BJ (cell line): ENCODE measurements at regions of chr11 and their contacts with region 1.

Region 1: GRCh38 chr11:11022125-11022730 is 164.4 kb upstream of the ZBED5 start:
- DNase-seq: no peak
- H3K4me3 ChIP-seq: no peak overlapping the region
- H3K27me3 ChIP-seq: peaks cover 2% of the 10 kb centered on the region; the same call in 1 of the 2 replicates
- CTCF ChIP-seq: peak; percentile 53

Region 2: GRCh38 chr11:10808553-10809372 is 213.5 kb before region 1 on chr11 and contains the start of gene EIF4G2:
- CTCF ChIA-PET with region 1: interaction called, 10 read pairs
- POLR2A ChIA-PET with region 1: interaction called, 4 read pairs
- DNase-seq: peak; percentile 94
- H3K4me3 ChIP-seq: peak within 1 kb of the TSS; percentile 98
- H3K27me3 ChIP-seq: no peaks in the 10 kb centered on the region
- CTCF ChIP-seq: 0 out of 2 replicates have a peak, but pooled peaks have one; percentile 1
- polyA plus RNA-seq, gene EIF4G2: 472 and 1,009 TPM in 2 replicates

Region 3: DNA sequence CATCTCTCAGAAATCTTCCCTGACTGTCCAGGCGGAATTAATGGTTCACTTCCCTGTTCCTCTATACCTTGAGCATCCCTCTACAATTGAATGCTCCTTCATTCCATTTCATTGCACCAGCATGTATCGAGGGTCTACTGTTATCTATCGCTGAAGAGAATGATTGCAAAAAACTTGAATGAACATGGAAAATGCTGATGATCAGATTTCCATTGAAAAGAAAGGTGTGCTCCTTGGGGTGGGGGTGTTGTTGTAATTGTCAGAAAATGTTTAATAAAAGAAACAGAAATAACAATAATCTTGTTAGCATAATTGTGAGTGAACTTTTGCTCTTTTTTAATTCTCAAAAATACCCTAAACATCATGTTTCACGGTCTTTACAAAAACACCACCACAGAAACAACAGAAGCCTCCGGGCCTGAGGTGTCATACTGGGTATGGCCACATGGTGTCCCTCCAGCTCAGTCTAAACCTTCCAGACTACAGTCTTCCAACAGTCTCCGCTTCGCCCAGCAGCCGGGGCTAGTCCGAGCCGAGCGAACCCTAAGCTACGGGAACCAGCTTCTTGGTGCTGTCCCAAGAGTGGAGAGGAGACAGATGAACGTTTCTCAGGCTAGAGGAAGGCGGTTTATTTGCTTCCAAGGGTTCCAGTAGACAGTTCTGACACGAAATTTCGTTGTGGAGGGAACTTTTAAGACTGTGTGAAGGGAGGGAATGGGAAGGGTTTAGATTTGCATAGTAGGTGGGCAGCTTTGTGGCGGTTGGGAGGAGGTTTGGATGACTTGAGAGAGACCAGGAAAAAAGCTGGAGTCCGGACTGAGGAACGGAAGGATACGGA is 88.6 kb before region 1 on chr11:
- CTCF ChIA-PET with region 1: interaction called, 72 read pairs
- POLR2A ChIA-PET with region 1: interaction called, 3 read pairs
- DNase-seq: peak; percentile 62
- H3K4me3 ChIP-seq: peak overlapping the region; percentile 49
- H3K27me3 ChIP-seq: no peaks in the 10 kb centered on the region
- CTCF ChIP-seq: peak; percentile 91

Region 4: GRCh38 chr11:11036848-11037732 is 14.9 kb after region 1 on chr11:
- CTCF ChIA-PET with region 1: interaction called, 67 read pairs
- POLR2A ChIA-PET with region 1: no interaction called
- DNase-seq: no peak
- H3K4me3 ChIP-seq: no peak overlapping the region
- H3K27me3 ChIP-seq: peaks cover 1% of the 10 kb centered on the region
- CTCF ChIP-seq: peak; percentile 61